CD4-positive, alpha-beta memory T cell (primary cell): ENCODE measurements at regions of chr9 and their contacts with region 1.

Region 1: DNA sequence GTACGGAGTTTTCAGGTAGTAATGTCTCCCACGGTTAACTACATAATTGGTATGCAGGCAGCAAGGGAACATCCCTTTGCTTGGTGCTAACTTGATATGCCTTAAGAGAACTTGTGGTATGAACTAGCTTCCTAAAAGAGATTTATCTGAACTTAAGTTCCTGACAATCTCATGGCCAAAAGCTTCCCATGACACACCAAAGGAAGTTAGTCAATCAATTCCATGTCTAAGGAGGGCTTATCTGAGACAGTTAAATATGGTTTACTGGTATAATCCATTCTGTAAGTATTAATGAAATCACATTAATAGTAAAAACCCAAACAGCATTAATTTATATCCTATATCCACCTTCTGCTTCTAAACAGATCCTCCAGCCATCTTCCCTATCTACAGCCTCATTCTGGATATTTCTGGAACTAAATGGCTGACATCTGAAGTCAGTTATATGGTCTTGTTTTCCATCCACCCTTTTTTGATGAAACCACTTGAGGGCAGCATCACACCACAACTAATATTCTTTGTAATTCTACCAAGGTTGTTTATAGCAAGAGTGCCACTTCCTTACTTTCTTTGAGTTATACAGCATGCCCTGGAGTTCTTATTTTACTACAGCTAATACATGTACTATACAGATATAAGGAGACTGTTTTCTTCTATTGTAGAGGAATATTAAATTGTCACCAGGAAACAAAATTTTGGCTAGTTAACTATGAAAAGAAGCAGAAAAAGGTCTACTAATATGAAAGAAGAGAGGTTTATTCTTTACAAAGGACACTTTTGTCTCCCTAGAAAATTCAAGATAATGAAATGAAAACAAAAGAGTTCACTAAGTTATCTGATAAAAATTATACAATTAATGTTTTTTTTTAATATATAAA is 34.7 kb downstream of the SHOC1 start:
- DNase-seq: peak; percentile 56 to 70 (median 68)
- H3K4me3 ChIP-seq: no peak overlapping the region
- H3K4me3 Mint-ChIP-seq: no peak overlapping the region
- H3K27ac ChIP-seq: no peak overlapping the region
- H3K27ac Mint-ChIP-seq: no peak overlapping the region
- H3K4me1 ChIP-seq: no peaks in the 10 kb centered on the region
- H3K4me1 Mint-ChIP-seq: peaks cover 0 to 4% (median 2%) of the 10 kb centered on the region in 4 donors
- H3K27me3 ChIP-seq: no peaks in the 10 kb centered on the region
- H3K27me3 Mint-ChIP-seq: no peaks in the 10 kb centered on the region

Region 2: DNA sequence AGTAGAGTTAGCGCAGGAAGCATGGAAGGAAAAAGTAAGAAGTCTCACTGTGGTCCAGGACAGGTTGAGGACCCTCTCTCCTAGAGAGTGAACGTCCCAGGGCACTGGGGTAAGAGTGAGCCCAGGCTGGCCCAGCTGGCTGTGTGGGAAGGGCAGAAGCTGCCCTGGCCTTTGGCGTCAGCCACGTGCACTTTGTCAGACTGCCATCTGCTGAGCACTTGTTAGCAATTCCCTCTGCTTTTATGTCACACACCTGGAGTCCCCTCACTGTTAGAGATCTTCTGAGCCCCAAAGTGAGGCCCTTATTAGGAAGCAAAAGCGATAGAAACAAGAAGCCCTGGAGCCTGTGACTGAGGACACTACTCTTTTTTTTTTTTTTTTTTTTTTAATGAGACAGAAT is 215.7 kb after region 1 on chr9:
- CTCF ChIA-PET with region 1: interaction called, 10 read pairs
- POLR2A ChIA-PET with region 1: no interaction called
- intact Hi-C with region 1: loop called (anchors 1 kb)
- DNase-seq: no peak
- H3K4me3 ChIP-seq: no peak overlapping the region
- H3K4me3 Mint-ChIP-seq: no peak overlapping the region
- H3K27ac ChIP-seq: no peak overlapping the region
- H3K27ac Mint-ChIP-seq: peak overlapping the region in 1 of 7 donors; percentile 52
- H3K4me1 ChIP-seq: no peaks in the 10 kb centered on the region
- H3K4me1 Mint-ChIP-seq: peaks cover 0 to 10% (median 6%) of the 10 kb centered on the region in 4 donors
- H3K27me3 ChIP-seq: no peaks in the 10 kb centered on the region
- H3K27me3 Mint-ChIP-seq: no peaks in the 10 kb centered on the region